Activated T-helper 2 cell treated with anti-CD3 and anti-CD28 coated beads, Interferon-gamma antibody, Interleukin-2, Interleukin-4, amounts not matched to agents 10 μg/mL and 5 μg/mL and 100 μg/mL, durations not matched to agents 14 hours and 24 hours and 36 hours (primary cell): ENCODE measurements at regions of chr12 and their contacts with region 1.

Region 1: DNA sequence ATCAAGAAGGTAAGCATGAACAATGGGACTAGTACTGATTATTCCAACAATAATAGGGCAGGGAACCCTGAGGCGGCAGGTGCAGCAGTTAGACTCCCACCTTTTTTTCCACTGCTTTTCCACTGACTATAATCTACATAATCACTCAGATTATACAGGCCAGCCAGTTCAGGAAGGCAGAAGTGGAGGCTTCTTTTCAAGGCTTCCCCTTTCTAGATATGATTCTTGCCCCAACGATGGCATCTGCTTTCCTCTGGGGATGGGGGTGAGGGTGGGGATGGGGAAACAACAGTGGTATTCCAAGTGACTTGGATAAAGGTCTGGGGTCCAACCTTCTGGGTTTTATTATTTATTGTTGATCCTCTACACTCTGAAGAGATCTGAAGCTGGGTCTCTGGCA is 331 bp downstream of the NCKAP1L start:
- DNase-seq: no peak
- H3K4me3 Mint-ChIP-seq: peak overlapping the region; percentile 96
- H3K27ac Mint-ChIP-seq: peak overlapping the region; percentile 92
- H3K4me1 Mint-ChIP-seq: peaks cover 38% of the 10 kb centered on the region
- H3K27me3 Mint-ChIP-seq: no peaks in the 10 kb centered on the region

Region 2: DNA sequence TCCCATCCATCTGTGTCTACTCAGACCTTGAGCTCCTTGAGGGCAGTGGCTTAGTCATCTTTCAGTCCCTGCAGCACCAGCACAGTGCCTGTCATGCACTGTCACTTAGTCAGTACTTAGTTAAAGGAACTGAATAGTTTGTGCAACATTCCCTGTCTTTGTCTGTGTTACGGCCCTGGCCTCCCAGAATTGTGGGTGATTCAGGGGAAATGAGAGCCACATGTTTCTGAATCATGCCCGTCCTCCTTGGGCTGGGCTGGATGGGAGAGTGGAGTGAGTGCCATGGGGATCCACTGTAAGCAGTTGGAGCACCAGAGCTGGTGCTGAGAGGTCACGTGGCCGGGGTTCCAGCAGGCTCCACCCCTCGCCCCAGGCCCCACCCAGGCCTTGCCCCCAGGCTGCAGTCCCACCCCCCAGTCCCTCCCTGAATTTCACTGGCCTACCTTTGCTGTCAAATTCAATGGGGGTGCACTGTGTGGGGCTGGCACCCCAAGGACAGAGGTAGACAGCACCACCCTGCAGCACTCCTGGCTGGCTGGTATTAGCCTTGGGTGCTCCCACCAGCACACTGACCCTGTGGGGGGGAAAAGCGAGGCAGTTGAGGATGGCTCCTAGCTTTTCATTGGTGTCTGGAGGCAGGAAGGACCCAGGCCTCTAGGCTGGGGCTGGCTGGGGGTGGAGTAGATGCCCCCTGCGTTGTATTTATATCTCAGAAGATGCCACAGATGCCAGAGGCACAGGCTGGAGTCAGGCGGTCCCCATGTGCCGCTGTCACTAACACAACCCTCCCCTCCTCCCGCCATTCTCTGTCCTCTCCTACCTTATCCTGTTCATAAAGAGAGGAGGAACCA is 86.3 kb before region 1 on chr12:
- intact Hi-C with region 1: loop called (anchors 5 kb)
- DNase-seq: peak; percentile 51
- H3K4me3 Mint-ChIP-seq: peak overlapping the region; percentile 83
- H3K27ac Mint-ChIP-seq: peak overlapping the region; percentile 85
- H3K4me1 Mint-ChIP-seq: peaks cover 52% of the 10 kb centered on the region
- H3K27me3 Mint-ChIP-seq: no peaks in the 10 kb centered on the region

Region 3: GRCh38 chr12:54522243-54522642 is 24.4 kb after region 1 on chr12:
- intact Hi-C with region 1: loop called (anchors 2 kb)
- DNase-seq: no peak
- H3K4me3 Mint-ChIP-seq: no peak overlapping the region
- H3K27ac Mint-ChIP-seq: peak overlapping the region; percentile 82
- H3K4me1 Mint-ChIP-seq: peaks cover 16% of the 10 kb centered on the region
- H3K27me3 Mint-ChIP-seq: no peaks in the 10 kb centered on the region

Region 4: DNA sequence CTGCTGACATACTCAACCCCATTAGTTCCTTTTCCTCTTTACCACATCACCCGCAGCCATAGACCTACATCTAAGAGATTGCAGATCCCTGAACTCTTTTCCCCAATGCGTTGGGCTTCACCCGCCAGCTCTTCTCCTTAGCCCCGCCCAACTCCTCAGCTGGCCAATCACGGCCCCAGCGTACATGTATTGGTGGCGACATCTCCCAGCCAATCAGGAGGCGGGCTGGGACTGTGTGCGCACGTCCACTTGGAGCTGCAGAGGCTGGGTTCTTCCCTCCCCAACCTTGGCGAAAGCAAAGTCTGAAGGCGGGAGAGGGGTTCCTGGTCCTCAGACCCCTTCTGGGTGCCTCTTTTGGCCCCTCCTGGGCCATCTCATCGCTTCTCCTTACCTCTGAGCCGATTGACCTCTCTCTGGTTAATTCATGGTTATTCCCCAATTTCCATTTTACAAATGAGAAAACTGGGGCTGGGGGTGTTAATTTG is 62.5 kb after region 1 on chr12:
- intact Hi-C with region 1: loop called (anchors 1 kb)
- DNase-seq: peak; percentile 85
- H3K4me3 Mint-ChIP-seq: peak overlapping the region; percentile 79
- H3K27ac Mint-ChIP-seq: peak overlapping the region; percentile 91
- H3K4me1 Mint-ChIP-seq: peaks cover 29% of the 10 kb centered on the region
- H3K27me3 Mint-ChIP-seq: no peaks in the 10 kb centered on the region